AG04449 (cell line): ENCODE measurements at regions of chr18 and their contacts with region 1.

Region 1: GRCh38 chr18:32552421-32553030 is 81.8 kb upstream of the GAREM1 start:
- DNase-seq: peak; percentile 17
- H3K4me3 ChIP-seq: no peak overlapping the region
- CTCF ChIP-seq: peak; percentile 71

Region 2: DNA sequence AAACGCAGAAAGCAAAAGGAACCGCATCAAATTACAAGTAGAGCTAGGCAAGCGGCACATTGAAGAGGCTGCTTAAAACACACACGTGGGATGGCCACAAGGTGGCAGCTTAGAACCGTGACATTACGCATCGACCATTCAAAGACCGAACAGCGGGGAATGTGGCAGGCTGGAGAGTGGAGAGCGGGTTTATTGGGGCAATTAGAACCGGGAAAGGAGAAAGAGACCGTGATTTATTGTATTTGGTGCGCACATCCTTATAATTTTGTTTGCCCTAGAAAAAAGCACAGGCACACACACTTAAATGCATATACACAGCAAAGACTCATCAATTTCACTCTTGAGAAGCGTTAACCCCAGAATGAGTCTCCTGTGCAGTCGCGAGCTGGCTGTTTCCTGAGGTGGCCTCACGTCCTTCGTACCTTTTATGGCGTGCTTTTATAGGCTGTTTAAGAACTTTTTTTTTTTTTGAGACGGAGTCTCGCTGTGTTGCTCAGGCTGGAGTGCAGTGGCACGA is 394.4 kb before region 1 on chr18:
- CTCF ChIA-PET with region 1: interaction called, 162 read pairs
- POLR2A ChIA-PET with region 1: no interaction called
- DNase-seq: peak; percentile 46
- H3K4me3 ChIP-seq: peak overlapping the region; percentile 38
- CTCF ChIP-seq: peak; percentile 86